GM12878 (cell line): ENCODE measurements at regions of chr2 and their contacts with region 1.

Region 1: GRCh38 chr2:26345545-26346453 is at the start of gene SELENOI:
- DNase-seq: peak; percentile 99
- ATAC-seq: peak; percentile 95
- H3K4me3 ChIP-seq: peak within 1 kb of the TSS; percentile 97
- H3K27ac ChIP-seq: peak within 1 kb of the TSS; percentile 89
- H3K4me1 ChIP-seq: peaks cover 12% of the 10 kb centered on the region
- H3K27me3 ChIP-seq: no peaks in the 10 kb centered on the region
- CTCF ChIP-seq: no peak
- EP300 ChIP-seq: peak in 1 of 2 experiments; percentile 43; a peak in 1 of 4 replicates
- POLR2A ChIP-seq: peak; percentile 93
- RAD21 ChIP-seq: no peak
- polyA plus RNA-seq, gene SELENOI: 5.2 to 6.3 TPM

Region 2: DNA sequence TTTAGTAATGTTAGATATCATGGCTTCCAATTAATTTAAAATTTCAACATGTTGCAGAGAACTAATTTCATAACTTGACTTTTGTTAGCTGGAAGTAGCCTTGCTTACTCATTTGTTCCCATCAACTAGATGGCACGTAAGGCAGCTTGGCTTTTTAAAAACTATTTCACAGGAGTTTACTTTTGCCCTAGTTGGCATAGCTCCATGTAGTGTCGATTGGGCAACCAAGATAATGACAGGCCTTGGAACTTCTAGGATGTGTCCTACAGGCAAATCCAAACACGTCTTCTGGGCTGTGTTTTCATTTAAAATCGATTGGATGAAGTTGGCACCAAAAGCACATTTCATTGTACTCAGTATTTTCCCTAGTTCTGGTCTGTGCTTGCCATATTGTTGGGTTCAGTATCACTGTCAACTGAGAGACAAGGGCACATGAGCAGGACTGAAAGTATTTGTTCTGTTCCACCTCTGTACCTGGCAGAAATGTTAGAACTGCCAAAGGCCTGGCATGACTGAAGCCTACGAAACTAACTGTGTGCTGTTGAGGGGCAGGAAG is 71.7 kb before region 1 on chr2:
- CTCF ChIA-PET with region 1: no interaction called
- POLR2A ChIA-PET with region 1: interaction called, 12 read pairs
- RAD21 ChIA-PET with region 1: interaction called, 3 read pairs
- SMC1A ChIA-PET with region 1: no interaction called
- in situ Hi-C with region 1: no loop called
- intact Hi-C with region 1: no loop called
- DNase-seq: no peak
- ATAC-seq: no peak
- H3K4me3 ChIP-seq: no peak overlapping the region
- H3K27ac ChIP-seq: no peak overlapping the region
- H3K4me1 ChIP-seq: peaks cover 6% of the 10 kb centered on the region
- H3K27me3 ChIP-seq: no peaks in the 10 kb centered on the region
- CTCF ChIP-seq: no peak
- EP300 ChIP-seq: no peak
- POLR2A ChIP-seq: no peak
- RAD21 ChIP-seq: no peak

Region 3: DNA sequence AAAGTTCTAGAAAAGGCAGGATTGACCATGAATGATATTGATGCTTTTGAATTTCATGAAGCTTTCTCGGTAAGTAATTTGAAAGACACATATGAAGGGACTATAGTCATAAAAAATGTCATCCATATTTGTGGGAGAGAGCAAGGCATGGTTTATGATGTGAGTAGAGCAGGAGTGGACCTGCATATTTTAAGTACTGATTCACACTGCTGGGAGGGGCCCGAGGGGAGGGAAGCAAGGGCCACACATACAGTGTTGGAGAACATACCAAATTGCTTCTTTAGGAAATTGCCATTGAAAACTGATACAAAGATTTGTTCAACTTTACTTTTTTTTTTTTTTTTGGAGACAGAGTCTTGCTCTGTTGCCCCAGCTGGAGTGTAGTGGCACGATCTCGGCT is 61.7 kb before region 1 on chr2:
- CTCF ChIA-PET with region 1: no interaction called
- POLR2A ChIA-PET with region 1: no interaction called
- RAD21 ChIA-PET with region 1: no interaction called
- SMC1A ChIA-PET with region 1: no interaction called
- in situ Hi-C with region 1: no loop called
- intact Hi-C with region 1: no loop called
- DNase-seq: no peak
- ATAC-seq: no peak
- H3K4me3 ChIP-seq: no peak overlapping the region
- H3K27ac ChIP-seq: no peak overlapping the region
- H3K4me1 ChIP-seq: no peaks in the 10 kb centered on the region
- H3K27me3 ChIP-seq: no peaks in the 10 kb centered on the region
- CTCF ChIP-seq: no peak
- EP300 ChIP-seq: no peak
- POLR2A ChIP-seq: no peak
- RAD21 ChIP-seq: no peak

Region 4: GRCh38 chr2:26299471-26300101 is 46.2 kb before region 1 on chr2:
- CTCF ChIA-PET with region 1: no interaction called
- POLR2A ChIA-PET with region 1: interaction called, 4 read pairs
- RAD21 ChIA-PET with region 1: no interaction called
- SMC1A ChIA-PET with region 1: interaction called, 10 read pairs
- in situ Hi-C with region 1: no loop called
- intact Hi-C with region 1: no loop called
- DNase-seq: peak; percentile 12
- ATAC-seq: peak; percentile 73
- H3K4me3 ChIP-seq: peak overlapping the region; percentile 57
- H3K27ac ChIP-seq: peak overlapping the region; percentile 38
- H3K4me1 ChIP-seq: peaks cover 4% of the 10 kb centered on the region; the same call in 1 of the 2 replicates
- H3K27me3 ChIP-seq: no peaks in the 10 kb centered on the region
- CTCF ChIP-seq: no peak
- EP300 ChIP-seq: no peak
- POLR2A ChIP-seq: no peak
- RAD21 ChIP-seq: no peak

Region 5: GRCh38 chr2:26316041-26316440 is 29.8 kb before region 1 on chr2:
- CTCF ChIA-PET with region 1: no interaction called
- POLR2A ChIA-PET with region 1: no interaction called
- RAD21 ChIA-PET with region 1: no interaction called
- SMC1A ChIA-PET with region 1: no interaction called
- in situ Hi-C with region 1: no loop called
- intact Hi-C with region 1: no loop called
- DNase-seq: no peak
- ATAC-seq: peak; percentile 71; the same call in 2 of the 3 replicates
- H3K4me3 ChIP-seq: no peak overlapping the region
- H3K27ac ChIP-seq: no peak overlapping the region
- H3K4me1 ChIP-seq: peaks cover 2% of the 10 kb centered on the region; the same call in 1 of the 2 replicates
- H3K27me3 ChIP-seq: no peaks in the 10 kb centered on the region; a peak in 1 of 4 replicates
- CTCF ChIP-seq: peak in 1 of 3 experiments; percentile 24; a peak in 1 of 6 replicates
- EP300 ChIP-seq: no peak
- POLR2A ChIP-seq: no peak
- RAD21 ChIP-seq: no peak; the same call in 1 of the 2 replicates

Region 6: GRCh38 chr2:26363323-26363722 is 17.5 kb after region 1 on chr2:
- CTCF ChIA-PET with region 1: interaction called, 5 read pairs
- POLR2A ChIA-PET with region 1: interaction called, 10 read pairs
- RAD21 ChIA-PET with region 1: no interaction called
- SMC1A ChIA-PET with region 1: interaction called, 6 read pairs
- in situ Hi-C with region 1: no loop called
- intact Hi-C with region 1: no loop called
- DNase-seq: no peak
- ATAC-seq: no peak
- H3K4me3 ChIP-seq: no peak overlapping the region
- H3K27ac ChIP-seq: no peak overlapping the region
- H3K4me1 ChIP-seq: no peaks in the 10 kb centered on the region
- H3K27me3 ChIP-seq: no peaks in the 10 kb centered on the region
- CTCF ChIP-seq: no peak
- EP300 ChIP-seq: no peak
- POLR2A ChIP-seq: no peak
- RAD21 ChIP-seq: no peak

Region 7: DNA sequence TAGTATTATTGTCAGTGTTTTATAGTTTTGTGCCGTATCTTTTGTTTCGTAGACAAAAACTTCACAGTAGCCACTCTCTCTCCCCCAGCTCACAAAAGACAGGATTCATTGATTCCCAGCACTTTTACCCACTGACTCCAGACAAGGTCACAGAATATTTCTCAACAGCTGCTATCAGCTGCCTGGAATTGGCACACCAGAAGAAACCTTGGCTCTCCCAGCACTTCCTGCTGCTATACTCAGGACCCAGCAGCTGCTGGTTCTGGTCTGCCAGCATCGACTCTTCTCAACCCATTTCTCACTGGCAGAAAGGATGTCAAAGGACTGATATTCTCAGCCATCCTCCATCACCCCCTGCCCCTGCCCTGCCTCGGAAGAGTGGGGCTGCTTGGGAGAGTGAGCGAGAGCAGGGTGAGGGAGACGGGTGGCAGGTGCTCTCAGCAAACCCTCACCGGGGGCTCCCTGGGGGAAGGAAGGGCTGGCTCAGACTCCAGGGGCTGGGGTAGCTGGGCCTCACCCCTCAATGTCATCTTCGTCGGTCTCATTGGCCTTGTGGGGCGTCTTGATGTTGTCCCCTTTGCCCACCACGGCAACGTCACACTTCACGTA is 138.3 kb after region 1 on chr2:
- CTCF ChIA-PET with region 1: no interaction called
- POLR2A ChIA-PET with region 1: no interaction called
- RAD21 ChIA-PET with region 1: no interaction called
- SMC1A ChIA-PET with region 1: no interaction called
- in situ Hi-C with region 1: no loop called
- intact Hi-C with region 1: no loop called
- DNase-seq: no peak
- ATAC-seq: no peak
- H3K4me3 ChIP-seq: no peak overlapping the region
- H3K27ac ChIP-seq: no peak overlapping the region
- H3K4me1 ChIP-seq: no peaks in the 10 kb centered on the region
- H3K27me3 ChIP-seq: no peaks in the 10 kb centered on the region
- CTCF ChIP-seq: no peak
- EP300 ChIP-seq: no peak
- POLR2A ChIP-seq: no peak
- RAD21 ChIP-seq: no peak